ENCODE measurements at regions of chr12 and their contacts with region 1.

Region 1: GRCh38 chr12:88351121-88351520 is 209.0 kb downstream of the TMTC3 start:
- DNase-seq: no peak
- ATAC-seq: no peak
- H3K4me3 ChIP-seq: no peak overlapping the region
- H3K4me3 Mint-ChIP-seq: no peak overlapping the region
- H3K27ac ChIP-seq: no peak overlapping the region
- H3K27ac Mint-ChIP-seq: no peak overlapping the region
- H3K4me1 ChIP-seq: no peaks in the 10 kb centered on the region
- H3K4me1 Mint-ChIP-seq: no peaks in the 10 kb centered on the region
- H3K27me3 ChIP-seq: no peaks in the 10 kb centered on the region
- H3K27me3 Mint-ChIP-seq: no peaks in the 10 kb centered on the region
- CTCF ChIP-seq: no peak

Region 2: GRCh38 chr12:88299567-88300101 is 51.5 kb before region 1 on chr12:
- CTCF ChIA-PET with region 1: no interaction called
- POLR2A ChIA-PET with region 1: no interaction called
- intact Hi-C with region 1: no loop called
- DNase-seq: no peak
- ATAC-seq: no peak
- H3K4me3 ChIP-seq: no peak overlapping the region
- H3K4me3 Mint-ChIP-seq: no peak overlapping the region
- H3K27ac ChIP-seq: no peak overlapping the region
- H3K27ac Mint-ChIP-seq: no peak overlapping the region
- H3K4me1 ChIP-seq: no peaks in the 10 kb centered on the region
- H3K4me1 Mint-ChIP-seq: no peaks in the 10 kb centered on the region
- H3K27me3 ChIP-seq: no peaks in the 10 kb centered on the region
- H3K27me3 Mint-ChIP-seq: no peaks in the 10 kb centered on the region
- CTCF ChIP-seq: no peak

Region 3: DNA sequence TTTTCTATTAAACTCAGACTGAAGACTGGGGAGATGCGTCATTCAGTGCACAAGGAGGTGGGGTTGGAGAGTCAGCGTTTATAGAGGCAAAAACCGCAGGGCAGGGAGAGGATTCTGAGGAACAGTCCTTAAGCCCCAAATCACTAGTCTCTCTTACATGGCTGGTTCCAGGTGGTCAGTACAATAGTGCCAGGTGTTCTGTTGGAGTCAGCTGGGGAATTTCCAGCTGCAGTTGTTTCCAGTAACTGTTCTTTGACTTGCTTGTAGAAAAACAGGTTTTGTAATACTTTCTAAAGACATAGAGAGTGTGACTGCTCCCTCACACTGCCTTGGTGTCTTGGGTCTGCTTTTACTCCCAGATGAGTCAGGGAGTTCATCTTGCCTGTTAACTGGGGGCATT is 16.9 kb before region 1 on chr12:
- CTCF ChIA-PET with region 1: no interaction called
- POLR2A ChIA-PET with region 1: no interaction called
- intact Hi-C with region 1: loop called in 1 of 2 experiments (anchors 1 kb)
- DNase-seq: no peak
- ATAC-seq: no peak
- H3K4me3 ChIP-seq: no peak overlapping the region
- H3K4me3 Mint-ChIP-seq: no peak overlapping the region
- H3K27ac ChIP-seq: no peak overlapping the region
- H3K27ac Mint-ChIP-seq: no peak overlapping the region
- H3K4me1 ChIP-seq: no peaks in the 10 kb centered on the region
- H3K4me1 Mint-ChIP-seq: no peaks in the 10 kb centered on the region
- H3K27me3 ChIP-seq: no peaks in the 10 kb centered on the region
- H3K27me3 Mint-ChIP-seq: no peaks in the 10 kb centered on the region
- CTCF ChIP-seq: no peak

Measured in CD8-positive, alpha-beta T cell (primary cell).